Sigmoid colon (tissue), 7 donors: ENCODE measurements at regions of chr7 and their contacts with region 1.

Region 1: DNA sequence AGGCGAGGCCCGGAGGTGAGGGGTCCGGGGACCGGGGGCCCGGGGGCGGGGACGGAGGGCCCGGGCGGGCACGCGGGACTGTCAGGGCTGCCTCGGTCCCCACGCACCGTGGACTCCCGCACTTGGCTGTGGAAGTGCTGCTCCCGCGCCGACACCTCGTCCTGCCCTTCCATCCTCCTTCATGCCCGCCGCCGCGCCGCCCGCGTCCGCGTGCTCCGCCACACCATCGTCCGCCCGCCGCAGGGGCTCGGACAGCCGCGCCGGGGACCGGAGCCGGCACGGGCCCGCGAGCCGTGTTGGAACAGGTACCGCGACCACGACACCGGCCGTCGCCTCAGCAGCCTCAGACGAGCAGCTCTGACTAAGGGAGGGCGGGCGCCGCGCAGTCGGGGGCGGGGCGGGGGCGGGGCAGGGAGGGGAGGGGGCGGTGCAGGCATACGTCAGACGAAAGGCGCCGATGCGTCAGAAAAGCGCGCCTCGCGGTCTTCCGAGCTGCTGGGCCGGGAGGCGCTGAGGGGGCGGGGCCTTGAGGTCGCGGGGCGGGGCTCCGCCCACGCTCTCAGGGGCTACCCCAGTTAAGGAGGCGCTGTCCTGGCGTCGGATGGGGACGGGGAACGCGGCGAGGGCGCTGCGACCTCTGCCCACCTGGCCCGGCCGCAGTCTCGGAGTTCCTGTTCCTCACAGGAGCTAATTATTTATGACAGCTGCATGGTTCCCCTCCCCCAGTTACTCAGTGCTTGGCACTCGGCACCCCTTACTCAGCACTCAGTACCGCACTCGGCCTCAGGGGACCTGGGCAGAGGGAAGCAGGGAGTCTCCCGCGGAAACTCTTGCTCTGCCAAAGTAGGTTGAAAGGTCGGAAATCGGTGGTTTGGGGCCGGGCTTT is at the start of gene LMBR1:
- DNase-seq: peak; percentile 97
- H3K4me3 ChIP-seq: peak within 1 kb of the TSS; percentile 58 to 94 (median 84)
- H3K27ac ChIP-seq: peak within 1 kb of the TSS; percentile 91 to 97 (median 92)
- H3K4me1 ChIP-seq: peaks cover 0 to 17% (median 9%) of the 10 kb centered on the region in 4 donors
- H3K27me3 ChIP-seq: no peaks in the 10 kb centered on the region
- CTCF ChIP-seq: peak; percentile 67 to 97 (median 84)
- EP300 ChIP-seq: peak in 1 of 4 donors; percentile 43
- POLR2A ChIP-seq: peak in 1 of 2 donors; percentile 38
- total RNA-seq, gene LMBR1: 43.9 to 60.9 (median 51.2) TPM

Region 2: DNA sequence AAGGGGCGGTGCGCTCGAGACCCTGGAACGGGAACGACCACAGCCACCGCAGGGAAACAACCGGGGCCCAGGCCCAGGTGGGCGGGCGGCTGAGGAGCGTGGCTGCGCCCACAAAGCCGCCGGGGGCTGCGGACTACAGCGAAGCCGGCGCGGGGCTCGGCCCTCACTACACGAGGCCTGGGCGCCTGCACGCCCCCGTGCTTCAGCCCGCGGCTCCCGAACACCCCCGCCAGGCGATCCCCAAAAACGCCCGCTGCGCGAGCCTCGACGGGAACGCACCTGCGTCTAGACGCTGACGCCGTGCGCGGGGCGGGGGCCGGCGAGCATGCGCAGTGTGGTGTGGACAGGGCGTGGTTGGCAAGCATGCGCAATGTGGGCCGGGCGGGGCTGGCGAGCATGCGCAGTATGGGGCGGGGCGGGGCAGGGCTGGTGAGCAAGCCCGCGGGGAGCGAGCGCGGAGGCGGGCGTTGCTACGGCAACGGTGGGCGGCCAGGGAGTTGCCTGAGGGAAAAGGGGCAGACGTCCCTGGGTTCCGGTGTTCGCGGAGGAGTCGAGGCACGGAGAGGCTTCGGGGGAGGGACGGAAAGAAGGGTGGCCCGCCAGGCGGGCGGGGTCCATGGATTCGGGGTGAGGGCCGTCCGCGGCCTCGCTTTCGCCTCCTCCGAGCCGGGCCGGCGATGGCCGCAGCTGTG is 252.7 kb before region 1 on chr7 and contains the start of gene RNF32:
- intact Hi-C with region 1: loop called (anchors 5 kb)
- DNase-seq: peak; percentile 95
- H3K4me3 ChIP-seq: peak within 1 kb of the TSS; percentile 62 to 75 (median 70)
- H3K27ac ChIP-seq: peak within 1 kb of the TSS; percentile 62 to 72 (median 70)
- H3K4me1 ChIP-seq: peaks cover 0 to 16% (median 15%) of the 10 kb centered on the region in 4 donors
- H3K27me3 ChIP-seq: peaks cover 0 to 15% (median 0%) of the 10 kb centered on the region in 3 donors
- CTCF ChIP-seq: no peak
- EP300 ChIP-seq: no peak
- POLR2A ChIP-seq: no peak
- total RNA-seq, gene RNF32: 0.36 to 2.1 (median 0.82) TPM

Region 3: GRCh38 chr7:156811706-156812105 is 81.4 kb before region 1 on chr7:
- intact Hi-C with region 1: no loop called
- DNase-seq: no peak
- H3K4me3 ChIP-seq: no peak overlapping the region
- H3K27ac ChIP-seq: no peak overlapping the region
- H3K4me1 ChIP-seq: no peaks in the 10 kb centered on the region
- H3K27me3 ChIP-seq: no peaks in the 10 kb centered on the region
- CTCF ChIP-seq: no peak
- EP300 ChIP-seq: no peak
- POLR2A ChIP-seq: no peak

Region 4: DNA sequence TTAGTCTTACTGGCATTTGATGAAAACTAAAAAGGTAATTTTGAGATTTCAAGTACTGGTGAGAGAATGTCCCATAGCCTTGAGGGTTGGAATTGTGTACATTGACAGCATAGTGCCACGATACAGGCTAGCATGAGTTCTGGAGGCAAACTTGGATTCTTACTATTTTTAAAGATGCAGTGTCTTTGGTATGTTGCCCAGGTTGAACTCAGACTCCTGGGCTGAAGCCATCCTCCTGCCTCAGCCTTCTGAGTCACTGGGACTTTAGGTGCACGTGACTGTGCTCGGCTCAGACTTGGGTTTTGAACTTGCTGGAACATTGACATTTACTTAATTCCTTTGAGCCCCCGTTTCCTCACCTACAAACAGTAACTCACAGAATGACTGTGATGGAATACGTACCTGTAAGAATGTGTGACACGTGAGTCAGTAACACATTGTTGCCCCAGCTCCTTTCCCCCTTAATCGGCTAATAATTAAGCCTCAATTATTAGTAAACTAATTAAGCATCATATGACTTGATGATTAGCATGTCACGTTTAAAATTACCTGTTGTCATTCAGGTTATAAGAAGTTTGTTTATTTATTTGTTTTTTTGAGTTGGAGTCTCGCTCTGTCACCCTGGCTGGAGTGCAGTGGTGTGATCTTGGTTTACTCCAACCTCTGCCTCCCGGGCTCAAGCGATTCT is 454.3 kb after region 1 on chr7:
- intact Hi-C with region 1: no loop called
- DNase-seq: peak; percentile 90
- H3K4me3 ChIP-seq: peak overlapping the region in 1 of 4 donors; percentile 16
- H3K27ac ChIP-seq: peak overlapping the region; percentile 49 to 78 (median 58)
- H3K4me1 ChIP-seq: peaks cover 0 to 85% (median 72%) of the 10 kb centered on the region in 4 donors
- H3K27me3 ChIP-seq: no peaks in the 10 kb centered on the region
- CTCF ChIP-seq: no peak
- EP300 ChIP-seq: peak in 1 of 4 donors; percentile 89
- POLR2A ChIP-seq: no peak